Left ventricle myocardium inferior (tissue), 1 donor: ENCODE measurements at regions of chr3 and their contacts with region 1.

Region 1: GRCh38 chr3:16834212-16834611 is 50.5 kb upstream of the PLCL2 start:
- DNase-seq: no peak
- H3K4me3 ChIP-seq: no peak overlapping the region
- H3K27ac ChIP-seq: peak overlapping the region; percentile 70
- H3K4me1 ChIP-seq: peaks cover 54% of the 10 kb centered on the region
- H3K27me3 ChIP-seq: no peaks in the 10 kb centered on the region
- CTCF ChIP-seq: no peak

Region 2: GRCh38 chr3:16670191-16670590 is 164.0 kb before region 1 on chr3:
- intact Hi-C with region 1: loop called (anchors 5 kb)
- DNase-seq: no peak
- H3K4me3 ChIP-seq: no peak overlapping the region
- H3K27ac ChIP-seq: no peak overlapping the region
- H3K4me1 ChIP-seq: no peaks in the 10 kb centered on the region
- H3K27me3 ChIP-seq: no peaks in the 10 kb centered on the region
- CTCF ChIP-seq: no peak

Region 3: GRCh38 chr3:17032407-17033034 is 198.3 kb after region 1 on chr3:
- intact Hi-C with region 1: no loop called
- DNase-seq: no peak
- H3K4me3 ChIP-seq: no peak overlapping the region
- H3K27ac ChIP-seq: no peak overlapping the region
- H3K4me1 ChIP-seq: peaks cover 67% of the 10 kb centered on the region
- H3K27me3 ChIP-seq: no peaks in the 10 kb centered on the region
- CTCF ChIP-seq: peak; percentile 75